ENCODE measurements at regions of chr20 and their contacts with region 1.

Region 1: GRCh38 chr20:54199721-54200176 is 8.1 kb upstream of the PFDN4 start:
- DNase-seq: peak; percentile 67 to 70
- ATAC-seq: peak in 6 of 8 donors; percentile 55 to 84 (median 67)
- H3K4me3 ChIP-seq: no peak overlapping the region
- H3K27ac ChIP-seq: no peak overlapping the region
- H3K4me1 ChIP-seq: no peaks in the 10 kb centered on the region
- H3K27me3 ChIP-seq: peaks cover 0 to 17% (median 0%) of the 10 kb centered on the region in 7 donors
- CTCF ChIP-seq: peak; percentile 71 to 92 (median 90)

Region 2: GRCh38 chr20:53468587-53468986 is 731.2 kb before region 1 on chr20:
- intact Hi-C with region 1: no loop called
- DNase-seq: no peak
- ATAC-seq: no peak
- H3K4me3 ChIP-seq: no peak overlapping the region
- H3K27ac ChIP-seq: no peak overlapping the region
- H3K4me1 ChIP-seq: no peaks in the 10 kb centered on the region
- H3K27me3 ChIP-seq: no peaks in the 10 kb centered on the region
- CTCF ChIP-seq: no peak

Region 3: GRCh38 chr20:54097236-54097529 is 102.6 kb before region 1 on chr20:
- intact Hi-C with region 1: loop called (anchors 1 to 5 kb)
- DNase-seq: no peak
- ATAC-seq: no peak
- H3K4me3 ChIP-seq: no peak overlapping the region
- H3K27ac ChIP-seq: no peak overlapping the region
- H3K4me1 ChIP-seq: no peaks in the 10 kb centered on the region
- H3K27me3 ChIP-seq: peaks cover 0 to 30% (median 8%) of the 10 kb centered on the region in 7 donors
- CTCF ChIP-seq: no peak

Region 4: DNA sequence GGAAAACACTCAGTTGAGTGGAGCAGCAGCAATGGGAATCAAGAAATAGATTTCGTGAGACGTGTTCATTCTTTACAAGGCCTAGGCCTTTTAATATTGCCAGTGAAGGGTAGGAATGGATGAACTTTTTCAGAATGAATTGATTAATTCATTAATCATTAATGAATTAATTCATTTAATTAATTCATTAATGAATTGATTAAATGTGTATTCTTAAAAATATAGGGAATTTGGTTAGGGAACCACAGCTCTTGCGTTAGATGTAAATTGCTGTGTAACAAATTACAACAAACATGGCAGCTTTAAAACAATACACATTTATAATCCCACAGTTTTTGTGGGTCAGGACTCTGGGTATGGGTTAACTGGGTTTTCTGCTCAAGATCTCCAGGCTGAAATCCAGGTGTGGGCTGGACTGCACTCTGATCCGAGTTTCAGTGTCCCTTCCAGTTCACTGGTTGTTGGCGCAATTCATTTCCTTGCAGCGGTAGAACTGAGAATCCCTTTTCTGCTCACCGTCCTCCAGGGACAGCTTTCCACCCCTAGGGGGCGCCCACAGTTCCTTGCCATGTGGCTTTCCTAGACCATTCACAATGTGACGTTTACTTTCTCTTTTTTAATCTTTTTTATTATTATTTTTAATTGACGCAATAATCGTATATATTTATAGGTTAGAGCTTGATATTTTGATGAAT is 96.5 kb before region 1 on chr20:
- intact Hi-C with region 1: loop called in 4 of 10 experiments (anchors 2 to 5 kb)
- DNase-seq: peak; percentile 55 to 68
- ATAC-seq: peak in 4 of 8 donors; percentile 51 to 59 (median 52)
- H3K4me3 ChIP-seq: no peak overlapping the region
- H3K27ac ChIP-seq: no peak overlapping the region
- H3K4me1 ChIP-seq: peaks cover 0 to 3% (median 0%) of the 10 kb centered on the region in 9 donors
- H3K27me3 ChIP-seq: peaks cover 0 to 21% (median 0%) of the 10 kb centered on the region in 7 donors
- CTCF ChIP-seq: peak; percentile 34 to 89 (median 76)

Region 5: DNA sequence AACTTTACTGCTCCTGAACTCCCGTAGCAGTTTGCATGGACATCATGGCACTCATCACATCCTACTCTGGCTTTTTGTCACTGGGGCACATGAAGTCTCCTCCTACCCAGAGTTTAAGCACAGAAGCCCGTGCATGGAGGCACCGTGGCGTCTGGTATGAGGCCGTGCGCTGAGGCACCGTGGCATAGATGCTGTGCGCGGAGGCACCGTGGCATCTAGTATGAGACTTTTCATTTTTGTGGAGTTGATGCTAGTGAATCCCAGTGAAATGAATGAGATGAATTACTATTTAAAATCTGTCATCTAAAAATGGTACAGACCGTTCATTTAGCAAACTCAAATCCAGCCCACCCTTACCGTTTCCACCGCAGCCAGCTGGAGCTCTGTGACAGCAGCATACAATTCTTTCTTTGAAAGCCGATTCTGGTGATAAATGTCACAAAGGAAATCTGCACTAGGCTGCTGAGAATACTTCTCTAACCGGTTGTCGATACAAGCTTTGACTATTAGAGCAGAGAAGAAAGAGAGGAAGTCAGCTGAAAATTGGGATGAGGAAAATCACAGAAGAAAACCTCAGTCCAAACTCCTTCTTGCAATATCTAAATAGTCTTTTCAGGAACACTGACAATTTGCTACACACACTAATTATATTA is 37.3 kb before region 1 on chr20:
- intact Hi-C with region 1: no loop called
- DNase-seq: no peak
- ATAC-seq: no peak
- H3K4me3 ChIP-seq: no peak overlapping the region
- H3K27ac ChIP-seq: no peak overlapping the region
- H3K4me1 ChIP-seq: no peaks in the 10 kb centered on the region
- H3K27me3 ChIP-seq: peaks cover 0 to 62% (median 45%) of the 10 kb centered on the region in 7 donors
- CTCF ChIP-seq: no peak

Measured in heart right ventricle (tissue), 16 donors.